Mucosa of descending colon (tissue), 3 donors: ENCODE measurements at regions of chr9 and their contacts with region 1.

Region 1: DNA sequence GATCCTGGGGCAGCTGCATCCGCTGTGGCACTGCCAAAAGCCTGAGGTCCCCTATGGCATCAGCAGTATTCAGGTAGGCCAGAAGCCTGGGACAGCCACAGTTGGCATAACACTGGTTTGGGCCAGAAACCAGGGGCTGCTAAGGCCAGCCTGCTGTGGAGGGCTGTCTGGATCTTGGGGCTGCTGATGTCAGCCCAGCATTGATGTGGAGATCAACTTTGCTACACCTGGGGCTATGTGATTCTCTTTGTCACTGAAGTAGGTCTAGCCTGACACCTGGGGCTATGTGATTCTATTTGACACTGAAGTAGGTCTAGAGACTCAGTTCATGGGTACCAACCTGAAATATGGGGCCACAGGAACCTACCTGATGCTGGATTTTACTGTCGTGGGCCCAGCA is 411.5 kb downstream of the RASEF start:
- DNase-seq: no peak
- ATAC-seq: no peak
- H3K4me3 ChIP-seq: no peak overlapping the region
- H3K4me1 ChIP-seq: no peaks in the 10 kb centered on the region
- CTCF ChIP-seq: no peak

Region 2: GRCh38 chr9:81984928-81985327 is 666.5 kb before region 1 on chr9:
- intact Hi-C with region 1: loop called in 1 of 2 experiments (anchors 5 kb)
- DNase-seq: no peak
- ATAC-seq: no peak
- H3K4me3 ChIP-seq: no peak overlapping the region
- H3K4me1 ChIP-seq: no peaks in the 10 kb centered on the region
- CTCF ChIP-seq: no peak